Right ventricle myocardium superior (tissue), 1 donor: ENCODE measurements at regions of chr12 and their contacts with region 1.

Region 1: DNA sequence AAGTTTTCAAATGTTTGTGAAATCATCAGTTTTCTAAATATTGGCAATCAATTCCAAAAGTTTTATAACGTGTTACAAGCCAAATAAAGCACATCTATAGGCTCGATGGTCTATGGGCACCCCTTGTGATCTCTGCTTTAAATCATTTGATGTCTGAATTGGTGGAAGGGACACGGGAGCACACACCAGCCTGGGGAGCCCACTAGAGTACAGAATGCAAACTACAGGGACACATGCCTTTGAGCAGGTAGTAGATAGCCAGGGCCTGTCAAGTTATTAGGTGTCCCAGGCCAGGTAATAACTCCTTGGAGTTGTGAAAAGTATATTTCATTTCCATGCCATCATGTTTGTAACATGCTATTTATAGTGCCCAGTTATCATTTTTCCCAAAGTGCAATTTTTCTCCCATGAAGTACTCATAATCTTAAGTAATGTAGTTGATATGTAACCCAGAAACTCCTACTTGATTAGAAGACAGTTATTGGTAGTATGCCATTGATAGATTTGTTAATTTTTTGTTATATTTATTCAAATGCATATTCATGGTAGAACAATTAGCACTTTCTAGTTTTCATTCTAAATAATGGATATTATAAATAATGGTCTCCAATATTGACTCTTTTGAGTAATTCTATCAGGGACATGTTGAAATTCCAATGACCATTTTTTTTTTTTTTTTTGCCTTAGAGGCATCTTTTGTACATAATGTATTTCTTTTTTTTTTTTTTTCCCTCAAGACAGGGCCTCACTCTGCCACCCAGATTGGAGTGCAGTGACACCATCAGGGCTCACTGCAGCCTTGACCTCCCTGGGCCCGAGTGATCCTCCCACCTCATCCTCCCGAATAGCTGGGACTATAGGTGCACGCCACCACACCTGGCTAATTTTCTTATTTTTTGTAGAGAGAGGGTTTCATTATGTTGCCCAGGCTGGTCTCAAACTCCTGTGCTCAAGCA is 96.9 kb upstream of the FGD4 start:
- DNase-seq: no peak
- ATAC-seq: peak; percentile 36

Region 2: DNA sequence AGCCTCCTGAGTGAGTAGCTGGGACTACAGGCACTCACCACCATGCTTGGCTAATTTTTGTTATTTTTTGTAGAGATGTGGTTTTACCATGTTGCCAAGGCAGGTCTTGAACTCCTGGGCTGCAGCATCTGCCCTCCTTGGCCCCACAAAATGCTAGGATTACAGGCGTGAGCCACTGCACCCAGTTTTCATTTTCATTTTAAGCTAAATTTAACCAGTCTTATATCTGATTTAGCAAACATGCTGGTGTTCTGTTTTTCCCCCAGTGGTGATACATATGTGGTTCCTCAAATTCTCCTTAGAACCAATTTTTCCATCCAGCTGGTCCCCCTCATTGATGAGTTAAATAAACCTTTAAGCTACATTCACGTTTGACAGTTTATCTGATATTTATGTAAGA is 239.6 kb before region 1 on chr12:
- intact Hi-C with region 1: loop called (anchors 5 kb)
- DNase-seq: no peak
- ATAC-seq: no peak